ENCODE measurements at regions of chr16 and their contacts with region 1.

Region 1: DNA sequence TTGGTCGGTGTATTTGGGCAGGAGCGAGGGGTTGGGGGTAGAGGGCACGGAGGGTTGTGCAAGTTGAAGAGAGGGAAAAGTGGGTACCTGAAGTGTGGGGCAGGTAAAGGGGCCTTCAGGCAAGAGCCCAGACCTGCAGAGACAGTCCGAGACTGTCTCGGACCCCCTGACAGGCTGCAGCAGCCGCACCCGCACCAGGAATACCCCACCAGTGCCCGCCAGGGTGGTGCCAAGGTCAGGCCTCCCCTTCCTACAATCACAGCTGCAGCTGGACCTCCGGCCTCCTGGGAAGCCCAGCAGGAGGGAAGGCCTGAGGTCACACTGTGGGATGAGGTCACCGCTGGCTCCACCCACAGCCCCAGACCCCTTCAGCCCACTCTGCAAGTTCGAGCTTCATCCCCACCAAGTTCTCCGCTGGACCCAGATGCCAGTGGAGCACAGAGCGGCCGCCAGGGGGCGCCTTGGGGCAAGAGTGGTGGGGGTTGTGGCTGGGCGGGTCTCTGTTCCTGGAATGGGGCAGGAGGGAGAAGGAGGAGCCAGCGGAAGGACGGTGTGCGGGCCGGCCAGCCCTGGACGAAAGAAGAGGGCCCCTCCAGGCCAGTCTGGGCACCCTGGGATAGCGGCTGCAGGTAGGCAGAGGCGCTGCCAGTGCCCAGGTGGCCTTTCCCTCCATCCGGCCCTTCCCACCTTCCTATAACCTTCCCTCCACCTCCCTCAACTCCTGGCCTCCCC is at the start of gene HSD3B7:
- DNase-seq: peak; percentile 95
- ATAC-seq: peak; percentile 85
- H3K4me3 Mint-ChIP-seq: peak within 1 kb of the TSS; percentile 61
- H3K27ac Mint-ChIP-seq: 0 out of 2 replicates have a peak within 1 kb of the TSS, but pooled peaks have one; percentile 27
- H3K4me1 Mint-ChIP-seq: peaks cover 6% of the 10 kb centered on the region
- H3K27me3 Mint-ChIP-seq: no peaks in the 10 kb centered on the region
- CTCF ChIP-seq: peak; percentile 97
- total RNA-seq, gene HSD3B7: 4.1 to 4.5 TPM (median 4.5 TPM) in 3 replicates

Region 2: GRCh38 chr16:30637942-30638341 is 346.9 kb before region 1 on chr16:
- CTCF ChIA-PET with region 1: no interaction called
- POLR2A ChIA-PET with region 1: no interaction called
- DNase-seq: no peak
- ATAC-seq: peak; percentile 16
- H3K4me3 Mint-ChIP-seq: no peak overlapping the region
- H3K27ac Mint-ChIP-seq: no peak overlapping the region
- H3K4me1 Mint-ChIP-seq: peaks cover 7% of the 10 kb centered on the region
- H3K27me3 Mint-ChIP-seq: peaks cover 3% of the 10 kb centered on the region
- CTCF ChIP-seq: no peak

Region 3: DNA sequence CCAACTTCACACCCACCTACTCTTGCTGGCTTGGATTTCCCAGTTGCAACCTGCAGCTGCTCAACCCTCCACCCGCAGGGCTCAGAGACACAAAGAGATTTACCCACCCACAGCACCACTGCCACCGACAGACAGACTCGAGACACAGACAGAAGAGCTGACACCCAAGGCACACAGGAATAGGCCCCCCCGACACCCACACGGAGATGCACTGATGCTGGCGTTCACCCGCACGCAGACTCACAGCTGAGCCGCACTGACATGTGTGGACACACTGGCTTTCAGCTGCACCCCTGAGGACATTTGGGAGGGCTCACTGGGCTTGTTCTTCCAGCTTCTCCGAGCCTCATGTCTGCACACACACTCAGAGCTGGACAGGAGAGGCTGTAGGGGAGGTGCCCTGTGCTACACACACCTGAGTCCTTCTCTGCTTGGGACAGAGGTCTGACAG is 17.4 kb after region 1 on chr16:
- CTCF ChIA-PET with region 1: interaction called, 79 read pairs
- POLR2A ChIA-PET with region 1: interaction called, 6 read pairs
- DNase-seq: no peak
- ATAC-seq: no peak
- H3K4me3 Mint-ChIP-seq: no peak overlapping the region
- H3K27ac Mint-ChIP-seq: peak overlapping the region; percentile 76; the same call in 1 of the 2 replicates
- H3K4me1 Mint-ChIP-seq: peaks cover 13% of the 10 kb centered on the region
- H3K27me3 Mint-ChIP-seq: peaks cover 7% of the 10 kb centered on the region; the same call in 1 of the 2 replicates
- CTCF ChIP-seq: no peak

Region 4: GRCh38 chr16:31038993-31039392 is 54.2 kb after region 1 on chr16:
- CTCF ChIA-PET with region 1: interaction called, 83 read pairs
- POLR2A ChIA-PET with region 1: interaction called, 5 read pairs
- DNase-seq: no peak
- ATAC-seq: no peak
- H3K4me3 Mint-ChIP-seq: no peak overlapping the region
- H3K27ac Mint-ChIP-seq: no peak overlapping the region
- H3K4me1 Mint-ChIP-seq: peaks cover 5% of the 10 kb centered on the region; the same call in 1 of the 2 replicates
- H3K27me3 Mint-ChIP-seq: no peaks in the 10 kb centered on the region
- CTCF ChIP-seq: no peak

Region 5: GRCh38 chr16:31073968-31074813 is 89.4 kb after region 1 on chr16 and contains the starts of genes ZNF646 and ZNF668:
- CTCF ChIA-PET with region 1: interaction called, 20 read pairs
- POLR2A ChIA-PET with region 1: interaction called, 6 read pairs
- DNase-seq: peak; percentile 97
- ATAC-seq: peak; percentile 86
- H3K4me3 Mint-ChIP-seq: peak within 1 kb of the TSS; percentile 99
- H3K27ac Mint-ChIP-seq: peak within 1 kb of the TSS; percentile 95
- H3K4me1 Mint-ChIP-seq: peaks cover 19% of the 10 kb centered on the region
- H3K27me3 Mint-ChIP-seq: no peaks in the 10 kb centered on the region
- CTCF ChIP-seq: no peak
- total RNA-seq, gene ZNF646: 26.7 to 29.3 TPM (median 29.1 TPM) in 3 replicates
- total RNA-seq, gene ZNF668: 13.5 to 17.3 TPM (median 16.6 TPM) in 3 replicates

Region 6: DNA sequence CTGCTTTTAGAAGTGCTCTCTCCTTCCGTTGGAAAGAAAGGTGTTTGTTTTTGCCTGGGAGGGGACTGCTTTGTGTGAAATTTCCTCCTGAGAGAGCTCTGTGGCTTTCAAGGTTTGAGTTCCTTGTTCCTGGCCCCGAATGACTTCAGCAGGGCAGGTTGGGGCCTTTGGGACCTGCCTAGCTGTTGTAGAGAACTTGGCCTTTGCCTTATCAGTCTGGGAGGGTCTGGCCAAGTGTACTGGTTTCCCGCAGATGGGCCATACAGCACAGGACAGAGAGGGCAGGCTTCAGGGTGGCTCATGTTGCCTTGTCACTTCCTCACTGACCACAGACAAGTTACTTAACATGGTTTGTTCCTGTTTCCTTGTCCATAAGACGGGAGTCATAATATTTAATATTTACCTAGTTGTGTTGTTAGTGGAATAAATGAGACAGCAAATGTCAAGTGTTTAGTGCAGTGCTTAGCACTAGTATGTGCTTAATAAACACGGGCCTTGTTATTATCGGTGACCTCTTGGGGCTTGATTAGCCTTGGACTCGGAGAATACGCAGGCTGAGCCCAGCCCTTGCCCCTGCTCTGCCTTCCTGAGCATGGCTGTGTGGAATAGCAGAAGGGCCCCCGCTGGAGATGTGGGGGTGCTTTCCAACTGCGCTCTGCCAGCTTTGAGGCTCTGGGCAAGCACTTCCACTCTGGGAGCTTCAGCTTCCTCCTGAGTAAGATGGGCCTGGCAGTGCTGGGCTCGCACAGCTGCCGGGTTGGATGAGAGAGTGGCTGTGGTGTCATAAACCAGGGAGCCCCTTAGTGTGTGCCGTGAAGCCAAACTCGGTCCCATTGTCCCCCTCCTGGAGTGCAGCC is 144.1 kb after region 1 on chr16:
- CTCF ChIA-PET with region 1: interaction called, 10 read pairs
- POLR2A ChIA-PET with region 1: no interaction called
- DNase-seq: no peak
- ATAC-seq: no peak
- H3K4me3 Mint-ChIP-seq: no peak overlapping the region
- H3K27ac Mint-ChIP-seq: 0 out of 2 replicates have a peak overlapping the region, but pooled peaks have one; percentile 66
- H3K4me1 Mint-ChIP-seq: peaks cover 36% of the 10 kb centered on the region
- H3K27me3 Mint-ChIP-seq: no peaks in the 10 kb centered on the region
- CTCF ChIP-seq: no peak

Region 7: DNA sequence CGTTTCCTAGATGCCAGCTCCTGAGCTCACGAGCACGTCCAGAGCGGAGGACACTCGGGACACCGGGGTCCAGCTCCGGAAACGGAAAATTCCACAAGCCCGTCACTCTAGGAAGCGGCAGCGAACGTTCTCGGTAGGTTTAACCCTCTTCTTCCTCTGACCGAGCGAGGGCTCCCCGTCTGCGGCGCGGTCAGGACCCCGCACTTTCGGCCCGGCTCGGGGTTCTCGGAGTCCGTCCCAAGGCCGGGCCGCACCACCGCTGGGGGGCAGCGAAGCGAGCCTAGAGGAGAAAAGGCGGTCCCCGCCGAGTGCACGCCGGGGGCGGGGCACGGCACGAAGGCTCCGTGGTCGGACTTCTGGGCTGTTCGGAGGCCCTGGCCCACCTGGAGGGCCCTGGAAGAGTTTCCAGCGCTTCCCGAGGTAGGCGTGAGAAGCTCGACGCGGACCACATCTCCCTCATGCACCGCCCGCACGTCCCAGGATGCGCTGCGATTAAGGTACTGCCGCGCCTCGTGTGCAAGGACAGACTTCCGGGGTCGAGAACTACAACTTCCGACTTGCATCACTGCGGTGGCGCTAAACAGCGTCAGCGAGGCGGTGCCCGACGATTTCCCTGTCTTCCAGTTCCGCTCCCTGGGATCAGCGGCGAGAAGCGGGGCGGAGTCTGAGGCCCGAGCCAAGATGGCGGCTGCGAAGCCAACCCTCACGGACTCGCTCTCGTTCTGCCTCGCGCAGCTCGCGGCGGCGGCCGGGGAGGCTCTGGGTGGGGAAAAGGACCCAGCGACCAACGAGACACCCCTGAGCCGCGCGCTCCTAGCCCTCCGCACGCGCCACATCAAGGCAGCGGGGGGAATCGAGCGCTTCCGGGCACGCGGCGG is 474.2 kb after region 1 on chr16 and contains the start of gene ARMC5:
- CTCF ChIA-PET with region 1: interaction called, 15 read pairs
- POLR2A ChIA-PET with region 1: interaction called, 3 read pairs
- DNase-seq: peak; percentile 97
- ATAC-seq: peak; percentile 77
- H3K4me3 Mint-ChIP-seq: peak within 1 kb of the TSS; percentile 88
- H3K27ac Mint-ChIP-seq: peak within 1 kb of the TSS; percentile 93
- H3K4me1 Mint-ChIP-seq: peaks cover 29% of the 10 kb centered on the region
- H3K27me3 Mint-ChIP-seq: no peaks in the 10 kb centered on the region
- CTCF ChIP-seq: no peak
- total RNA-seq, gene ARMC5: 11.3 to 13.2 TPM (median 13.0 TPM) in 3 replicates

Measured in WTC11 (cell line).